ENCODE measurements at regions of chr5 and their contacts with region 1.

Region 1: DNA sequence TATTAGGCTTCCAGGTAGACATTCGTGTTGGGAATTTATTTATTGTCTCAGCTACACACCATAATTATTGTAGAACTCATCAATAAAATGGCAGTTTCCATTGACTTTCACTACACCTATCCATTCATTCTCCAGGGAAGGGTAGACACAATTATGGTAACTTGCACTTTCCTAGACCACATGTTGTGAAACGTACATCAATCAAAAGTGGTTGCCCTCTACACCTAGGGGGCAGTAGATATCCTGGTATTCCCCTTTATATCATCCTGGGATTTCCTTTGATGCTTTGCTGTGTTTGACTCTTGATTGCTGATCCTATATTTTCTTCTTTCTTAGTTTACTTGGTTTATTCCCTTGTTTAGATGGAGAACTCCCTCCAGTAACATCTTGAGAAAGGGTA is 47.9 kb downstream of the ADGRV1 start:
- DNase-seq: no peak
- ATAC-seq: peak; percentile 48; the same call in 2 of the 3 replicates
- H3K4me3 ChIP-seq: no peak overlapping the region
- H3K27ac ChIP-seq: no peak overlapping the region
- H3K4me1 ChIP-seq: peaks cover 3% of the 10 kb centered on the region; the same call in 1 of the 2 replicates
- H3K27me3 ChIP-seq: no peaks in the 10 kb centered on the region; a peak in 1 of 4 replicates
- CTCF ChIP-seq: peak; percentile 31 to 41 (median 41); a peak in 4 of 6 replicates
- EP300 ChIP-seq: no peak
- POLR2A ChIP-seq: no peak
- RAD21 ChIP-seq: peak; percentile 44

Region 2: DNA sequence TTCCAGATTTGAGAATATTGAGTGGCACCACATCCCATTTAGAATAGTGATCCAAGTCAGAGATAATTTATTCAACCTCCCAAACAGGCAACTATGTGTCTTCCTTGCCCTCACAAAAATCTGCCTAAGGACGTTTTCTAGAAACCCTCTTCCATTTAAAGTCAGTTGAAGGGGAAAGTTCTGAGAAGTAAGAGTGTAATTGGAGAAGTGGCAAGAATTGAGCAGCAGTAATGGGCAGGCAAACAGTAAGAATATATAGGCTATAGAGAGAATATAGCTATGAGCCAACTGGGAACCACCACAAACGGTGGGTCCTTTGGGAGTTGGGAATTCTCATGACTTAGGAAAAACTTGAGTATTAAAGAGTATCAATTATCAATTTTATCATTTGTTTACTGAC is 165.9 kb before region 1 on chr5:
- CTCF ChIA-PET with region 1: interaction called, 40 read pairs
- POLR2A ChIA-PET with region 1: no interaction called
- RAD21 ChIA-PET with region 1: interaction called, 8 read pairs
- SMC1A ChIA-PET with region 1: interaction called, 30 read pairs
- in situ Hi-C with region 1: loop called (anchors 5 kb)
- intact Hi-C with region 1: loop called (anchors 2 kb)
- DNase-seq: no peak
- ATAC-seq: 0 out of 3 replicates have a peak, but pooled peaks have one; percentile 31
- H3K4me3 ChIP-seq: no peak overlapping the region
- H3K27ac ChIP-seq: no peak overlapping the region
- H3K4me1 ChIP-seq: no peaks in the 10 kb centered on the region
- H3K27me3 ChIP-seq: no peaks in the 10 kb centered on the region
- CTCF ChIP-seq: no peak
- EP300 ChIP-seq: no peak
- POLR2A ChIP-seq: no peak
- RAD21 ChIP-seq: no peak